GM12878 (cell line): ENCODE measurements at regions of chr17 and their contacts with region 1.

Region 1: DNA sequence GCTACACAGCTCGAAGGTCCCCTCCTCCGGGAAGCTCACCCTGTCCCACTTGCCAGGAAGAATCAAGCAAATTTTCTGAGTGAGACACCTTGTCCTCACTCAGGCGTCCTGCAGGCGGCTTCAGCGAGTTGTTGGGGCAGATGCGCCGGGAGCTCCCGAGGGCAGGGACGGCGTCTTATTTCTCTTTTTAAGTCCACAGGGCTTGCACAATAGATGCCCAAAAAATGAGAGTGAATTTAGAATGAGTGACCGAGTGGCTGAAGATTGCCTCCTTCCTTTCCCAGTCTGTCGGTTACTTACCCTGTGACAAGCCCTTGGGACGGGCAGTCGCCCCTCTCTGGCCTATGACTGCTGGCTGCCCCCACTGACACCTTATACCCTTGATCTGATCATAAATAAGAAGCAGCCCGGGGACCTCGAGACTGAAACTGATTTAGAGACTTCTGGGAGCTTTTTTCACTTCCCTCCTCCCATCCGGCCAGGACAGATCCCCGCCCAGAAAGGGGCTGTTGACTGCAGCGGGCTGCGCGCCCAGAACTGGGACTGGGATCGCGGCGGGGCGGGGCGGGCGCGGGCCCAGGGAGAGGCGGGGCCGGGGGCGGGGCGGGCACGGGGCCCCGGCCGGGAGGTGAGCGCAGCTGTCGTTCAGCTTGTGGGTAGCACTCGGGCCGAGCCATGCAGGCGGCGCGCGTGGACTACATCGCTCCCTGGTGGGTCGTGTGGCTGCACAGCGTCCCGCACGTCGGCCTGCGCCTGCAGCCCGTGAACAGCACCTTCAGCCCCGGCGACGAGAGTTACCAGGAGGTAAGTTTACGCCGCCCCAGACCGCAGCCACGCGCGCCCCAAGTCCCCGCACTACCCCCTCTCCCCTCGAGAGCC is at the start of gene TTYH2:
- DNase-seq: no peak
- ATAC-seq: peak; percentile 76
- H3K4me3 ChIP-seq: peak within 1 kb of the TSS; percentile 77
- H3K27ac ChIP-seq: peak within 1 kb of the TSS; percentile 47
- H3K4me1 ChIP-seq: peaks cover 28% of the 10 kb centered on the region
- H3K27me3 ChIP-seq: no peaks in the 10 kb centered on the region
- CTCF ChIP-seq: peak; percentile 18 to 37 (median 25); a peak in 4 of 6 replicates
- EP300 ChIP-seq: no peak
- POLR2A ChIP-seq: peak; percentile 86
- RAD21 ChIP-seq: peak; percentile 29; the same call in 1 of the 2 replicates
- polyA plus RNA-seq, gene TTYH2: 0.26 to 0.47 TPM

Region 2: GRCh38 chr17:74239170-74239569 is 26.0 kb after region 1 on chr17:
- CTCF ChIA-PET with region 1: interaction called, 4 read pairs
- POLR2A ChIA-PET with region 1: interaction called, 3 read pairs
- RAD21 ChIA-PET with region 1: no interaction called
- SMC1A ChIA-PET with region 1: no interaction called
- in situ Hi-C with region 1: no loop called
- intact Hi-C with region 1: loop called (anchors 1 kb)
- DNase-seq: no peak
- ATAC-seq: no peak
- H3K4me3 ChIP-seq: no peak overlapping the region
- H3K27ac ChIP-seq: no peak overlapping the region
- H3K4me1 ChIP-seq: peaks cover 1% of the 10 kb centered on the region; the same call in 1 of the 2 replicates
- H3K27me3 ChIP-seq: no peaks in the 10 kb centered on the region
- CTCF ChIP-seq: no peak
- EP300 ChIP-seq: no peak
- POLR2A ChIP-seq: no peak
- RAD21 ChIP-seq: no peak

Region 3: DNA sequence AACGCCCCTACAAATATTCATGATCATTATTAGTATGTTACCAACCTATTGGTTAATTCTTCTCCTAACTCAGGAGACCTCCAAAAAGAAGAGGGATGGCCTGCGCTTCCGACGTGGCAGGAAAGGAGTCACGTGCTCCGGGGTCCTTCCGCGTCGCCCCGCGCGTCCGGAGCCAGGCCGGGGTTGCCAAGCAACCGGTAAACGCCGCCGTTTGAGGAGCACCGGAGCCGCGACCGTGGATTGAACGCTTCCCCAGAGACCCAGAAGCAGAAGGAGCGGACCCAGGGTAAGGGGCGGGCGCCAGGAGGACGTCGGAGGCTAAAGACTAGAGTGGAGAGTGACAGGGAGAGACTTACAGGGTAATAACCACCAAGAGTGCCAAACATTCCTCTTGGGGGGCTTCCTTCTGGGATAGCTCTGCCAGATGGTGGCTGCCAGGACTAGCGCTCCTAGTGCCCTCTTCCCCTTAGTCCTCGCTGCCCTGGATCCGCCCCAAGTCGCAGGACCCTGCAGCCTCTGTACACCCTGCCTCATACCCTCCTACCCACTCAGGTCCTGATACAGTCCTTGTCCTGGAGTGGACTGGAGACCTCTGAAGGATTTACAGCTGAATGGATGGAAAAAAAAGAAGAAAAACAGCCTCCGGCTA is 61.0 kb after region 1 on chr17 and contains the start of gene DNAI2:
- CTCF ChIA-PET with region 1: no interaction called
- POLR2A ChIA-PET with region 1: interaction called, 3 read pairs
- RAD21 ChIA-PET with region 1: interaction called, 10 read pairs
- SMC1A ChIA-PET with region 1: interaction called, 3 read pairs
- in situ Hi-C with region 1: loop called (anchors 10 kb)
- intact Hi-C with region 1: no loop called
- DNase-seq: no peak
- ATAC-seq: no peak; the same call in 1 of the 3 replicates
- H3K4me3 ChIP-seq: no peak within 1 kb of the TSS
- H3K27ac ChIP-seq: no peak within 1 kb of the TSS; the same call in 1 of the 2 replicates
- H3K4me1 ChIP-seq: peaks cover 21% of the 10 kb centered on the region
- H3K27me3 ChIP-seq: no peaks in the 10 kb centered on the region
- CTCF ChIP-seq: no peak
- EP300 ChIP-seq: no peak
- POLR2A ChIP-seq: no peak
- RAD21 ChIP-seq: no peak
- polyA plus RNA-seq, gene DNAI2: 0.04 to 0.08 TPM

Region 4: DNA sequence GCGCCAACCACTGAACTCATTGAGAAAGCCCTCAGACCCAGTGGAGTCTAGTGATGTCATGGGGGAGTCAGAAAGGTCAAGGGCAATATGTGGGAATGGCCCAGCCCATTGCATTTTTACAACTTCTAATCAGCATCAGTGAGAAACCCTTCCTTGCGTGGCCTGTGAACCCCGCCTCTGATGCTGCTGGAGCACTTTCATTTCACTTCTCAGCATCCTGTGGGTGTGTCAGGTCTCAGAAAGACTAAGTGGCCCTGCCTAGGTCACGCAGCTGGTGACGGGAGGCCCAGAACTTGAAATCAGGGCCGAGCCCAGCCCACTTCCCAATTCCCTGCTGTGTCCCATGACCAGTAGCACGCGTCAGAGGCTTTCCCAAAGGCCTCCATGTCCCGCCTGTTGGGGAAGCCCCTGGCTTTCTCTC is 67.0 kb after region 1 on chr17:
- CTCF ChIA-PET with region 1: interaction called, 9 read pairs
- POLR2A ChIA-PET with region 1: interaction called, 3 read pairs
- RAD21 ChIA-PET with region 1: interaction called, 10 read pairs
- SMC1A ChIA-PET with region 1: interaction called, 4 read pairs
- in situ Hi-C with region 1: loop called (anchors 10 kb)
- intact Hi-C with region 1: loop called (anchors 5 kb)
- DNase-seq: no peak
- ATAC-seq: peak; percentile 76
- H3K4me3 ChIP-seq: 0 out of 2 replicates have a peak overlapping the region, but pooled peaks have one; percentile 24
- H3K27ac ChIP-seq: peak overlapping the region; percentile 79
- H3K4me1 ChIP-seq: peaks cover 27% of the 10 kb centered on the region
- H3K27me3 ChIP-seq: no peaks in the 10 kb centered on the region
- CTCF ChIP-seq: no peak
- EP300 ChIP-seq: no peak
- POLR2A ChIP-seq: no peak
- RAD21 ChIP-seq: no peak

Region 5: DNA sequence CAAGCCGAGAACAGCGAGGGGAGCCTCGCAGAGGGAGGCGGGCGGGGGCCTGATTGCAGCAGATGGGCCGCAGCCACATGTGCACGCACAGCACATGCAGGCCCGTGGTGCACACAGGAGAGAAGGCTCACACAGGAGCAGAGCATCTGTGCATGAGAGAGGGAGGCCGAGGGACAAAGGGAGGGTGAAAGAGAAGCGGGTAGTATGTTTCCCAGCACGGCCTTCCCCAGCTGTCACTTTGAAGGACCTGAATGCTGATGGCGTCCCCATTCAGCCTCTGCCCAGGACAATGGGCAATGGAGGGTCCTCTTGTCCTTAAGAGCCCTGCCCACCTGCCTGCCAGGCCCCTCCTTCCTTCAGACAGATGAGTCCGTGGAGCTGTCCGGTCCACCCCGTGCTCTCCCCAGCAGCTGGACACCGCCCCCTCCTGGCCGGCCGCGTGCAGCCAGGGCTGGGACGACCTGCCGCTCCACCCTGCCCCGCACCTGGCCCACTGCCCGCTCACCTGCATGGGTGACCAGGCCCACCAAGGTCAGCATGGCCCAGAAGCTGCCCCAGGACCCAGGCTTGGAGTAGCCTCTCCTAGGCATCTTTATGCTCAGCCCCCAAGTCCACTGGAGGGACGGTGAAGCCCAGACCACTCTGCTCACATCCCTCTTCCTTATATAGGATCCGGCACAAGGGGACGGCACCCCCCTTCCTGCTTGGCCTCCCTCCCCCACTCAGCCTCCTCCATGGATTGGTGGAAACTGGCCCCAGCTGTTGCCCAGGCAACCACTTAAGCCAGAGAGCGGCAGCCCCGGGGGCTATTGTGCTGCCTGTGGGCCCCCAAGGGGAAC is 148.3 kb after region 1 on chr17 and contains the start of gene BTBD17:
- CTCF ChIA-PET with region 1: interaction called, 5 read pairs
- POLR2A ChIA-PET with region 1: no interaction called
- RAD21 ChIA-PET with region 1: interaction called, 4 read pairs
- SMC1A ChIA-PET with region 1: no interaction called
- in situ Hi-C with region 1: no loop called
- intact Hi-C with region 1: loop called (anchors 2 kb)
- DNase-seq: no peak
- ATAC-seq: peak; percentile 92
- H3K4me3 ChIP-seq: no peak within 1 kb of the TSS
- H3K27ac ChIP-seq: no peak within 1 kb of the TSS
- H3K4me1 ChIP-seq: no peaks in the 10 kb centered on the region
- H3K27me3 ChIP-seq: peaks cover 2 to 3% of the 10 kb centered on the region in 2 experiments; a peak in 3 of 4 replicates
- CTCF ChIP-seq: peak; percentile 45 to 62 (median 54)
- EP300 ChIP-seq: no peak
- POLR2A ChIP-seq: no peak
- RAD21 ChIP-seq: peak; percentile 45; the same call in 1 of the 2 replicates
- polyA plus RNA-seq, gene BTBD17: not detected